Caco-2 (cell line): ENCODE measurements at regions of chr5 and their contacts with region 1.

Region 1: GRCh38 chr5:31809050-31809870 is 170.3 kb downstream of the PDZD2 start:
- DNase-seq: peak; percentile 74 to 75
- H3K4me3 ChIP-seq: no peak overlapping the region
- H3K4me3 Mint-ChIP-seq: no peak overlapping the region
- H3K27ac Mint-ChIP-seq: no peak overlapping the region
- H3K4me1 ChIP-seq: no peaks in the 10 kb centered on the region
- H3K4me1 Mint-ChIP-seq: no peaks in the 10 kb centered on the region
- H3K27me3 ChIP-seq: no peaks in the 10 kb centered on the region
- H3K27me3 Mint-ChIP-seq: peaks cover 7% of the 10 kb centered on the region
- CTCF ChIP-seq: peak; percentile 74 to 79

Region 2: GRCh38 chr5:31581498-31582099 is 227.7 kb before region 1 on chr5:
- CTCF ChIA-PET with region 1: interaction called, 6 read pairs
- POLR2A ChIA-PET with region 1: no interaction called
- intact Hi-C with region 1: loop called (anchors 1 kb)
- DNase-seq: peak in 1 of 2 experiments; percentile 22
- H3K4me3 ChIP-seq: no peak overlapping the region
- H3K4me3 Mint-ChIP-seq: no peak overlapping the region
- H3K27ac Mint-ChIP-seq: no peak overlapping the region
- H3K4me1 ChIP-seq: no peaks in the 10 kb centered on the region
- H3K4me1 Mint-ChIP-seq: no peaks in the 10 kb centered on the region
- H3K27me3 ChIP-seq: no peaks in the 10 kb centered on the region; the same call in 1 of the 2 replicates
- H3K27me3 Mint-ChIP-seq: peaks cover 23% of the 10 kb centered on the region
- CTCF ChIP-seq: peak; percentile 15 to 74

Region 3: DNA sequence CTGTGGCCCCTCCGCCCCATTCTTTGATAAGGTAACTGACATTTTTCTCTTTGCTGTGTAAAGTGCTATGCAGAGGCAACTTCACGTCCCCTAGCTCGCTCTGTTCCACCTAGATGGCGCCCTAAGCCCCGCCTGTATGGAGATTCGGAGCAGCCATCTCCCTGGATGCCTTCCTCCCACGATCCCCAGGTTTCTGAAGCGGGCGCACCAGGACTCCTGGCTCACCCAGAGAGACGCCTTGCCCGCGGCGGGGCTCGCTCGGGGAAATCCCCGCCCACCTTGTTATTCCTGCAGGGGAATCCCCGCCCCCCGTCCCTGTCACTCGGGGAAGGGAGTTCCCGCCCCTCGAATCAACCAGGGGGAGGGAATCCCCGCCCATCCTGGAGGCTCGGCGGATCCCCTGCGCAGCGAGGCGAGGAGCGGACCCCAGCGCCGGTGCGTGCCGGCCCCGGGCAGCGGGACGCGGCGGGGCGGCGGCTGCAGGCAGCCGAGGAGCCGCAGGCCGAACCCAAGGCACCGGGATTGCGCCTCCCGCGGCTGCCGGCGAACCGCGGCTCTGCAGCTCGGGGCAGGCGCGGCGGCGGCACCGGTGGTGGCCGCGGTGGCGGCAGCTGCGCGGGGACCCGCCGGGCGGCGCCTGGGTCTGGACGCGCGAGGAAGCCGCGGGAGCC is 170.4 kb before region 1 on chr5 and contains the start of gene PDZD2:
- CTCF ChIA-PET with region 1: interaction called, 7 read pairs
- POLR2A ChIA-PET with region 1: no interaction called
- intact Hi-C with region 1: loop called (anchors 1 kb)
- DNase-seq: peak; percentile 84 to 85
- H3K4me3 ChIP-seq: peak within 1 kb of the TSS; percentile 54
- H3K4me3 Mint-ChIP-seq: peak within 1 kb of the TSS; percentile 74
- H3K27ac Mint-ChIP-seq: peak within 1 kb of the TSS; percentile 13
- H3K4me1 ChIP-seq: peaks cover 6% of the 10 kb centered on the region; the same call in 1 of the 2 replicates
- H3K4me1 Mint-ChIP-seq: peaks cover 6% of the 10 kb centered on the region
- H3K27me3 ChIP-seq: no peaks in the 10 kb centered on the region; the same call in 1 of the 2 replicates
- H3K27me3 Mint-ChIP-seq: peaks cover 10% of the 10 kb centered on the region
- CTCF ChIP-seq: peak in 1 of 2 experiments; percentile 64
- total RNA-seq, gene PDZD2: 0.16 and 0.91 TPM in 2 replicates

Region 4: GRCh38 chr5:31664566-31664965 is 144.7 kb before region 1 on chr5:
- CTCF ChIA-PET with region 1: interaction called, 3 read pairs
- POLR2A ChIA-PET with region 1: no interaction called
- intact Hi-C with region 1: loop called (anchors 1 kb)
- DNase-seq: peak; percentile 50 to 62
- H3K4me3 ChIP-seq: no peak overlapping the region
- H3K4me3 Mint-ChIP-seq: no peak overlapping the region
- H3K27ac Mint-ChIP-seq: no peak overlapping the region
- H3K4me1 ChIP-seq: no peaks in the 10 kb centered on the region
- H3K4me1 Mint-ChIP-seq: no peaks in the 10 kb centered on the region
- H3K27me3 ChIP-seq: no peaks in the 10 kb centered on the region
- H3K27me3 Mint-ChIP-seq: peaks cover 11% of the 10 kb centered on the region
- CTCF ChIP-seq: peak in 1 of 2 experiments; percentile 41

Region 5: DNA sequence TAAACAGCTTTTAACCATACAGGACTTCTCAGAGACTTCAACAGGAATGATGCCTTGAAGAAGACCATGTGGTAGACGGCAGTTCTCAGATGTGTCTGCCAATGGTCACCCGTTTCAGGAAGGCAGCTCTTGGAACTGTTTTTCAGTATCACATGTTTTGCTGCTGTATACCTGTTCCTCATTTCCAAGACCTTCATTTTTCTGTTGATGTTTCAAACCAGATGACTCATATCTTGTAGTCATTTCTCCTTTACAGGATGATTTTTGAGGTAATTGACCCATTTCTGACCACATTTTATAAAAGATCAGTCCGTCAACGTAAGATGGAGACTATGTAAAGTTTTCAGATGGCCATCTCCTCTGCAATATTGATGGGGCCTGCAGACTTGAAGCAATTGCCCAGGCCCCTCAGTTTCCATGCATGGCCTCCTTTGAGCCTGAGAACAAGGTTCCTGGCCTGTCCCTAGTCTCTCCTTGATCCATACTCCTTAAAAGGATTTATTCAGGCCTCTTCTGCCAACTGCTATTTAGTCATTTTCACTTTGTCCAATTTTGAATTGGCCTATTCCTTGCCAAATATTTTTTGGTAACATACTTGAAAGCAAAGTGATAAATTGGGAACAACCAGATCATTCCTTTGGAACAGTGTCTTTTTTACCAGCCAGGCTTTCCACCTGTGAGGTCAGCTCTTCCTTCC is 41.8 kb before region 1 on chr5:
- CTCF ChIA-PET with region 1: interaction called, 4 read pairs
- POLR2A ChIA-PET with region 1: no interaction called
- intact Hi-C with region 1: loop called (anchors 2 kb)
- DNase-seq: no peak
- H3K4me3 ChIP-seq: no peak overlapping the region
- H3K4me3 Mint-ChIP-seq: no peak overlapping the region
- H3K27ac Mint-ChIP-seq: no peak overlapping the region
- H3K4me1 ChIP-seq: no peaks in the 10 kb centered on the region
- H3K4me1 Mint-ChIP-seq: no peaks in the 10 kb centered on the region
- H3K27me3 ChIP-seq: no peaks in the 10 kb centered on the region
- H3K27me3 Mint-ChIP-seq: peaks cover 35% of the 10 kb centered on the region
- CTCF ChIP-seq: no peak